ENCODE measurements at regions of chrX and their contacts with region 1.

Region 1: DNA sequence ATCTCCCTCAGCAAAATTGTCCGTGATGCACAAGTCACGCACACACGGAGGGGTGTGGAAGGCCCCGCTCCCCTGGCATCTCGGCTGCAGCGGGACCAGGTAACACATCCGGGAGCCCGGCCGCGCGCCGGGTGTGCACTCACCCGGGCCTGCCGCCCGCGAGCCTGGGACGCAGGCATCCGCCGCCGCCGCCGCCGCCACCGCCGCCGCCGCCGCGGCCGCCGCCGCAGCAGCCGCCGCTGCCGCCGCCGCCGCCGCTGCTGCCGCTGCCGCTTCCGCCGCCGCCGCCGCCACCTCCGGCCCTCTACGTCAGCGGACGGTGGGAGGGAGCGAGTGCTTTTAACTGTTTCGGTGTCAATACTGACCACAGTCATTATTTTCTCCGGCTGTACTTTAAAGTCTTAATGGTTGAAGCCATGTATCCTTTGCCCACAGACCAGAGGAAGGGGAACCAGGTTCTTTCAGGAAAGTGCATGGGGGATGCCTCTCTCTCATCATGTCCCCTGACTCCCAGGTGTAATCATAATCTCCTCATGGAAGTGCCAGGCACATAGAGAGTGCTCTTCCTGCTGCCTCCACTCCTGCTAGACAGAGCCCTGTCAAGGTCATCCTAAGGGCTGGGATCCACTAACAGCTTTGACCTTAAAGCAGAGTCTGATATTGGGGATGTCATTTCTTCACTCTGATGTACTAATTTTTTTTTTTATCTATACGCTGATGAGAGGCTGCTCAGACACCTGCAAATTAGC is 38.0 kb downstream of the MAGEE2 start:
- DNase-seq: peak; percentile 56
- H3K4me3 Mint-ChIP-seq: peak overlapping the region; percentile 74
- H3K27ac Mint-ChIP-seq: peak overlapping the region; percentile 70
- H3K4me1 Mint-ChIP-seq: peaks cover 13% of the 10 kb centered on the region
- H3K27me3 Mint-ChIP-seq: no peaks in the 10 kb centered on the region

Region 2: GRCh38 chrX:75522565-75523431 is 224.3 kb before region 1 on chrX and contains the start of gene ZDHHC15:
- CTCF ChIA-PET with region 1: no interaction called
- intact Hi-C with region 1: loop called (anchors 10 kb)
- DNase-seq: peak; percentile 68
- H3K4me3 Mint-ChIP-seq: peak within 1 kb of the TSS; percentile 80
- H3K27ac Mint-ChIP-seq: peak within 1 kb of the TSS; percentile 70
- H3K4me1 Mint-ChIP-seq: peaks cover 26% of the 10 kb centered on the region
- H3K27me3 Mint-ChIP-seq: no peaks in the 10 kb centered on the region
- total RNA-seq, gene ZDHHC15: 0.17 to 0.21 TPM

Region 3: DNA sequence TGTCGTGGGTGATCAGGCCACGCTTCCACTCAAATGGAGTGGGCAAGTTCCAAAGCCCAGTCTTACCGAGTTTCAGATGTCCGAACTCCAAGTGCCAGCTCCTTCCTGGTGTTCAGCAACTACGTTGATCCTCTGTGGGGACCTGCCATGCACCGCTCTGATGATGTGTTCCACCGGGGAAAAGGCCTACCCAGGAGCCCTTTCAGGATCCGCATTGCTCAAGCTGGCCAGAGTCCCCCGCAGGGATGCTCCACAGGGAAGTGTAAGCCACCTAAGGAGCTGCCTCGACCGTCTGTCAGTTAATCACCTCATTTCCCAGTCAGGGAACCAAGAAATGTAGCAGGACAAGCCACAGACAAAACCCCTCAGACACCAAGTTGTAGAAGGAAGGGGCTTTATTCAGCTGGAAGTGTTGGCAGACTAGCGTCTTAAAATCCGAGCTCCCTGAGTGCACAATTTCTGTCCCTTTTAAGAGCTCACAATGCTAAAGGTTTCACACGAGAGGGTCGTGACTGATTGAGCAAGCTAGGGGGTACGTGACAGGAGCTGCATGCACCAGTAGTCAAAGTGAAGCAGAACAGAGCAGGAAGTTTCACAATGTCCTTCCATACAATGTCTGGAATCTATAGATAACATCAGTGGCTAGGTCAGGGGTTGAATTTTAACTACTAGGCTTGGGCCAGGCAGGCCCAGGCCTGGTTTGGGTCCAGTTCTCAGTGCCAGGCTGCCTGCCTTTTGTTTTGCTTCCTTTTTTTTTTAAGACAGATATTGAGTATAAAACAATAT is 98.1 kb before region 1 on chrX:
- CTCF ChIA-PET with region 1: no interaction called
- intact Hi-C with region 1: no loop called
- DNase-seq: no peak
- H3K4me3 Mint-ChIP-seq: no peak overlapping the region
- H3K27ac Mint-ChIP-seq: no peak overlapping the region
- H3K4me1 Mint-ChIP-seq: no peaks in the 10 kb centered on the region
- H3K27me3 Mint-ChIP-seq: no peaks in the 10 kb centered on the region

Region 4: DNA sequence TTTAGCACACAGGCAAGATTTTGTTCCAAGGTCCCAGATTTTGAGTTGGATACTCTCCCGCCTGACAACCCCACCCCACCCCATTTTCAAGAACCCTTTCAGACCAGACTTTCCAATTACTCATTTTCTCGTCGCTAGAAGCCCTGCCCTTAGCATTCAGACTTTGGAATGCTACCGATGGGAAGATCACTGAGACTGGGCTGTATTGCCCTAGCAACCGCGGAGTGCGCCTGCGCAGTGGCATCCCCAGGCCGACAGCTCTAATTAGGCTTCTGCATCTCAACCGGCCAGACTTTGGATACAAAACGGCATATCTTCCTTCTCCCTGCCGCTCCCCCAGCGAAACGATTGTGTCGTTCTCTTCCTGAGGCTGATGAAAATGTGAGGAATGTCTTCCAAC is 34.5 kb after region 1 on chrX:
- CTCF ChIA-PET with region 1: no interaction called
- intact Hi-C with region 1: no loop called
- DNase-seq: no peak
- H3K4me3 Mint-ChIP-seq: no peak overlapping the region
- H3K27ac Mint-ChIP-seq: no peak overlapping the region
- H3K4me1 Mint-ChIP-seq: peaks cover 3% of the 10 kb centered on the region
- H3K27me3 Mint-ChIP-seq: peaks cover 7% of the 10 kb centered on the region

Measured in activated naive CD4-positive, alpha-beta T cell treated with anti-CD3 and anti-CD28 coated beads for 36 hours (primary cell).